Heart right ventricle (tissue), 16 donors: ENCODE measurements at regions of chr15 and their contacts with region 1.

Region 1: DNA sequence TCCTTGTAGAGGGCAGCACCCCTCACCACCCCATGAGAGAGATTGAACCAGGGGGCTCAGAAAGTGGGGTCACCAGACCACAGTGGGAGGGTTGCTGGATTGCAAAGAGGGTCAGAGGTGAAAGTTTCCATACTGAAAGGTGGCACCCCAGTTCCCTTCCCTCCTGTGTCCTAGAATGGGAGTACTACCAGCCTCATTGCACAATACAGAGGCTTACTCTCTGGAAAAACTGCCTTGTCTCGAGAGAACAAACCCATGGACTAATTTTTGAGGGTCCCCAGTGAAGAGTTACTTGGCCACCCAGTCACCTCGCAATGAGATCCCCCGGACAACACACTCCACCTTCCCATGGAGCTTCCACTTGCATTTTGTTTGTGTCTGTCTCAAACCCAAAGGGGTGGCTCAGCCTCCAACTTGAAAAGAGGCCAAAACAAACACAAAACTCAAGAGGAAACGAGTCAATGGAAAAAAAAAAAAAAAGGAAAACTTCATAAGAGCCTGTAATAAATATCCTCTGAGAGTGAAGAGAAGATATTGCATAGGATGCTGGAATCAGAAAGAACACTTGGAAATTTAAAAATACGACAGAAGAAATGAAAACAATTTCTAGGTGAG is 18.6 kb downstream of the MESP2 start:
- DNase-seq: peak in 1 of 2 donors; percentile 54
- ATAC-seq: peak in 6 of 8 donors; percentile 28 to 76 (median 60)
- H3K4me3 ChIP-seq: no peak overlapping the region
- H3K27ac ChIP-seq: peak overlapping the region in 4 of 10 donors; percentile 16 to 59 (median 36)
- H3K4me1 ChIP-seq: peaks cover 0 to 16% (median 10%) of the 10 kb centered on the region in 9 donors
- H3K27me3 ChIP-seq: no peaks in the 10 kb centered on the region
- CTCF ChIP-seq: no peak

Region 2: DNA sequence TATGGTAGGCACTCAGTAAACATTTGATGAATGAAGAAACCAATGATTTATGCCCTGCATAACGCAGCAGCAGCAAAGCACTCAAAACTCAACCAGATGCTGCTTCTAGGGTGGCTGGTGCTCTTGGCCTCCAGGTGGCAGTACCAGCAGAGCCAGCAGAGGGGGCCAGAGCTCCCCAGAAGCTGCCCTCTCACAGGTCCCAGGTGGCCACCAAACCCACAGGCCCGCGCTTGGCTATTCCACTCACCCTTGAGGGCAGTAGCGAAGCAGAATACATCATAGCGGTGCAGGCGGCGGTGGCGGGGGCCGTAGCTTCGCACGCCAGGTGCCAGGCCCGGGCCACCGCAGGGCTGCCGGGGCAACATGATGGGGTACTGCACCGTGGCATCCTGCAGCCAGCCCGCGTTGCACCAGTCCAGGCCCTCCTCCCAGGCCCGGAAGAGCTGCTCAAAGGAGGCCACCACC is 916.0 kb before region 1 on chr15:
- intact Hi-C with region 1: no loop called
- DNase-seq: peak in 1 of 2 donors; percentile 39
- ATAC-seq: peak in 6 of 8 donors; percentile 27 to 68 (median 48)
- H3K4me3 ChIP-seq: no peak overlapping the region
- H3K27ac ChIP-seq: no peak overlapping the region
- H3K4me1 ChIP-seq: peaks cover 0 to 8% (median 0%) of the 10 kb centered on the region in 9 donors
- H3K27me3 ChIP-seq: no peaks in the 10 kb centered on the region
- CTCF ChIP-seq: peak in 8 of 9 donors; percentile 26 to 67 (median 62)

Region 3: GRCh38 chr15:89828241-89829082 is 33.7 kb after region 1 on chr15:
- intact Hi-C with region 1: loop called in 2 of 10 experiments (anchors 1 to 2 kb)
- DNase-seq: peak; percentile 51 to 73
- ATAC-seq: peak; percentile 74 to 82 (median 78)
- H3K4me3 ChIP-seq: peak overlapping the region in 1 of 10 donors; percentile 18
- H3K27ac ChIP-seq: peak overlapping the region in 7 of 10 donors; percentile 11 to 72 (median 41)
- H3K4me1 ChIP-seq: peaks cover 7 to 60% (median 17%) of the 10 kb centered on the region in 9 donors
- H3K27me3 ChIP-seq: no peaks in the 10 kb centered on the region
- CTCF ChIP-seq: peak in 2 of 9 donors; percentile 14 to 20

Region 4: GRCh38 chr15:89836255-89837133 is 41.8 kb after region 1 on chr15:
- intact Hi-C with region 1: loop called in 1 of 10 experiments (anchors 1 kb)
- DNase-seq: no peak
- ATAC-seq: peak; percentile 43 to 72 (median 58)
- H3K4me3 ChIP-seq: no peak overlapping the region
- H3K27ac ChIP-seq: peak overlapping the region in 7 of 10 donors; percentile 7 to 83 (median 54)
- H3K4me1 ChIP-seq: peaks cover 0 to 65% (median 12%) of the 10 kb centered on the region in 9 donors
- H3K27me3 ChIP-seq: no peaks in the 10 kb centered on the region
- CTCF ChIP-seq: no peak